Posterior vena cava (tissue), 2 donors: ENCODE measurements at regions of chr10 and their contacts with region 1.

Region 1: GRCh38 chr10:121899727-121900126 is 28.1 kb downstream of the ATE1 start:
- DNase-seq: no peak

Region 2: DNA sequence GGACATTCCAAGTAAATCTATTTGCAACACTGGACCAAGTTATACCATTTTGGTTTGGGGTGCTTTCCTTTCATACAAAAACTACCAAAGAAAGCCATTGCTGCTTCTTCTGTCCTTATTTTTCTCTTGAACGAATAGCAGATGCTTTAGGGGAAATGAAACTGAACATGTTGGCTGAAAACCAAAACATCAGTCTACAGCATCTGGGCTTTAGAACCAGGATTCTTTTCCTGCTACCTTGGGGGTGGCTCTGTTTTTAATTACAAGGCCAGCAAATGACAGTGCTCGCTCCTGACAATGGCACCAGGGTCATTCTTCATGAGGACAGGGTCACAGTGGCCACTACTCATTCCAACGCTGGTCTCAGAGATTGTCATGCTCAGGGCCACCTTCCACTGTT is 968.3 kb before region 1 on chr10:
- intact Hi-C with region 1: loop called in 1 of 2 experiments (anchors 10 kb)
- DNase-seq: no peak

Region 3: GRCh38 chr10:123698741-123699140 is 1799.0 kb after region 1 on chr10:
- intact Hi-C with region 1: no loop called
- DNase-seq: peak; percentile 59